ENCODE measurements at regions of chr22 and their contacts with region 1.

Region 1: GRCh38 chr22:43819931-43820640 is 8.0 kb upstream of the EFCAB6 start:
- DNase-seq: peak in 1 of 5 donors; percentile 13
- ATAC-seq: no peak
- H3K4me3 ChIP-seq: no peak overlapping the region
- H3K27ac ChIP-seq: no peak overlapping the region
- H3K4me1 ChIP-seq: no peaks in the 10 kb centered on the region
- H3K27me3 ChIP-seq: peaks cover 0 to 33% (median 0%) of the 10 kb centered on the region in 9 donors
- CTCF ChIP-seq: no peak
- POLR2A ChIP-seq: no peak

Region 2: DNA sequence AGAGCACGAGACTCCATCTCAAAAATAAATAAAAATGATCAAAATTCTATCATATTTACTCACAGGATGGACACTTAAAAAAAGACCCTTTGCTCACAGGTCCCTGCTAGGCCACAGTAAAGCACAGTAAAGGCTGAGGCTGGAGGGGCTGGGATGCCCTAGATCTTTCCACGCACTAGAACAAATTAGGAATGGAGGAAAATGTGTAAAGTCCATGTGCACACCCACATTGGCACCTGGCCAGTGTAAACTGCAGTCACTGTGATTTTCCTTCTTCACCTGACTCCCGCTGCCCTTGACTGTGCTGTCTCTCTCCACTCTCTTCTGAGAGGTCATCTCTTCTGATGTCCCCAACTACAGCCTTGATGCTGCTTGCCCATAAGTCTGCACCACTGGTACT is 203.4 kb before region 1 on chr22:
- intact Hi-C with region 1: no loop called
- DNase-seq: no peak
- ATAC-seq: no peak
- H3K4me3 ChIP-seq: no peak overlapping the region
- H3K27ac ChIP-seq: no peak overlapping the region
- H3K4me1 ChIP-seq: peaks cover 0 to 4% (median 0%) of the 10 kb centered on the region in 12 donors
- H3K27me3 ChIP-seq: no peaks in the 10 kb centered on the region
- CTCF ChIP-seq: no peak
- POLR2A ChIP-seq: no peak

Region 3: DNA sequence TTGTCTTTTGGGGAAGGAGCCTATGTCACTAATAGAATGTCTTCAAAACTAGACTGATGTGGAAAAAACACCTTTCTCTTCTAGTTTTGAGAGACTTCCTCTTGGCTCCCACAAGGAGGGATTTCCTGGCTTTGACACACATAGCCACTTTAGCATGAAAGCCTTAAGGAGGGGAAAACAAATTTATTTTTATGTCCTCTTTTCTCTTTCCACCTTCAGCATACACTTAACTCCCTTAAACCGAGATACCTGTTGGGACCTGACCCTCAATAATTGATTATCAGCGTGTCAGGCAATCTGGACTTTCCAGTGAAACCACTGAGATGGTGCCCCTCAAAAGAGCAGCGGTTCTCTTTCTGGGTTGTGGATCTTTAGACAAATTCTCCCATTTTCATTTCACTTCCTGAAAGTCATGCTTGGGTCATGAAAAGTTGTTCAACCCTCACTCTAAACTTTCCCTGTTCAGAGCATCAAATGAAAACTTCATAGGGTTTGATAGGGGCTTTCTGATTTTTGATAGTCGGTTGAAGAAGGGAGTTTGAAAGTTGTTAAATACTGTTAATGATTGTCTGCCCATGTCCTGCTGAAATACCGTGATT is 17.1 kb before region 1 on chr22:
- intact Hi-C with region 1: loop called in 1 of 10 experiments (anchors 2 kb)
- DNase-seq: no peak
- ATAC-seq: no peak
- H3K4me3 ChIP-seq: no peak overlapping the region
- H3K27ac ChIP-seq: no peak overlapping the region
- H3K4me1 ChIP-seq: no peaks in the 10 kb centered on the region
- H3K27me3 ChIP-seq: no peaks in the 10 kb centered on the region
- CTCF ChIP-seq: no peak
- POLR2A ChIP-seq: no peak

Region 4: GRCh38 chr22:43878079-43878795 is 58.2 kb after region 1 on chr22:
- intact Hi-C with region 1: no loop called
- DNase-seq: no peak
- ATAC-seq: peak in 1 of 4 donors; percentile 25
- H3K4me3 ChIP-seq: no peak overlapping the region
- H3K27ac ChIP-seq: no peak overlapping the region
- H3K4me1 ChIP-seq: no peaks in the 10 kb centered on the region
- H3K27me3 ChIP-seq: peaks cover 0 to 60% (median 0%) of the 10 kb centered on the region in 9 donors
- CTCF ChIP-seq: no peak
- POLR2A ChIP-seq: no peak

Measured in heart left ventricle (tissue), 16 donors.